ENCODE measurements at regions of chr4 and their contacts with region 1.

Region 1: DNA sequence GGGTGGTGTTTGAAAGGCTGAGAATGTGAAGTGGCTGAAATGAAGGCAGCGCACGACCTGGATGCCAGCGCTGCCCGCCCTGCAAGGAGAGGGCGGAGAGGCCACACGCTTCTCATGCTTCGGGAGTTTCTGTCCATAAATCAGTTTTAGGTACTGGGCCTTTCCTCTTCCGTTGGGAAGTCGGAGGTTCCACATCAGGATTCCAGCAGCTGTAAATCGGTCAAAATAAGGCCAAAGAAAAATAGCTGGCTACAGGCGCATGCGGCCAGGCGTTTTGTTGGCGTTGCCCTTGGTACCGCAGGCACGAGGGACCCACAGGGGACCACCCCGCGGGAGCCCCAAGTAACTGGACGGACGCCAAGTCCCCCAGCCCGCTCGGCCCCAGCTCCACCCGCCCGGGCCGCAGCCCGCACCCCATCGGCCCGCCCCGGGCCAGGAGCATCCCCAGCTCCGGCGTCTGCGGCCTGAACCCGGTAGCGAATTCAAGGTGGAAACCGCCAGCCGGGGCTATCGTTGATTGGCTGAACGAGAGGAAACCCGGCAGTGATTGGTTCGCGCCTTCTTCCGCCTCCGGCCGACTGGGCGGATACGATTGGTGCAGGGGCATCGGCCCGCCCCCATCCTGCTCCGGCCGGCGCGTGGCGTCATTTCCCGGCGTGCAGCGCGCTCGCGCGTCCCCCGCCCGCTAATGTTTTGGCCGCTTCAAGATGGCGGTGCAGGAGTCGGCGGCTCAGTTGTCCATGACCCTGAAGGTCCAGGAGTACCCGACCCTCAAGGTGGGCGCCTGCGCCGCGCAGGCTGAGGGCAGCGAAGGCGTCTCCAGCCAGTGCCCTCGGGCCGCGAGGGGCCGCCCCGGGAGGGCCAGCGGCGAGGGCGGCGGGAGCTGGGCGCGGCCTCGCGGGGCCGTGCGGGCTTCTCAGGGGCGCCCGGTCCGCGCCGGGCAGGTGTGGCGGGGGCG is at the start of gene MAEA:
- DNase-seq: peak; percentile 98
- H3K4me3 ChIP-seq: peak within 1 kb of the TSS; percentile 85 to 99 (median 94)
- H3K27ac ChIP-seq: peak within 1 kb of the TSS; percentile 84 to 94 (median 88)
- H3K4me1 ChIP-seq: peaks cover 0 to 48% (median 41%) of the 10 kb centered on the region in 4 donors
- H3K27me3 ChIP-seq: no peaks in the 10 kb centered on the region
- CTCF ChIP-seq: no peak
- EP300 ChIP-seq: peak in 1 of 4 donors; percentile 12
- POLR2A ChIP-seq: peak; percentile 53 to 69
- total RNA-seq, gene MAEA: 44.2 to 56.2 (median 49.6) TPM

Region 2: DNA sequence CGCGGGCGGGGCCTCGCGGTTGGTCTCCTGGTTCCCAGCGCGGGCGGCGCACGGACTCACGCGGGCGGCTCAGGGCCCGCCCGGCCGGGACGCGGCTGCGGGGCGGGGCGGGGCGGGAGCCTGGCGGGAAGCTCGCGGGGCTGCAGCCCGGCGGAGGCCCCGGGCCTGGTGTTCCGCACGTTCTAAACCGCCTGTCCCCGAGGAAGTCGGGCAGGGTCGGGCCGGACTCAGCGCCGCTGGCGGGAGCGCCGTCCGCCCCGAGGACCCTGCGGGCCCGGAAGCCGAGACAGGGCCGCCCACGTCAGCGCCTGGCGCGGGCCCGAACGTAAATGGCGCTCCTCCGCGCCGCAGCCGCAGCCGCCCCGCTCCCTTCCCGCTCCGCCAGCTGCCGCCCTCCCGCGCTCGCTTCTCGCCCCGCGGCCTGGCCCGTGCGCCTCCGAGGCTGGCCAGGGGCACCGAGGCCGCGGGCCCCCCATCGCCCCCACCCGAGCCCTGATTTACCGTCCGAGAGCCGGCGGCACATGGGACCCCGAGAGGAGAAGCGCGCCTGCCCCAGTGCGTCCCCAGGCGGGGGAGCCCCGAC is 40.2 kb before region 1 on chr4:
- intact Hi-C with region 1: loop called (anchors 1 kb)
- DNase-seq: peak; percentile 93
- H3K4me3 ChIP-seq: peak overlapping the region; percentile 42 to 98 (median 74)
- H3K27ac ChIP-seq: peak overlapping the region; percentile 88 to 99 (median 94)
- H3K4me1 ChIP-seq: peaks cover 0 to 55% (median 52%) of the 10 kb centered on the region in 4 donors
- H3K27me3 ChIP-seq: no peaks in the 10 kb centered on the region
- CTCF ChIP-seq: no peak
- EP300 ChIP-seq: no peak
- POLR2A ChIP-seq: no peak